Activated CD8-positive, alpha-beta T cell treated with anti-CD3 and anti-CD28 coated beads, Interleukin-2, amount 10 ng/mL, durations not matched to agents 7 days and 5 days (primary cell): ENCODE measurements at regions of chr9 and their contacts with region 1.

Region 1: GRCh38 chr9:114738581-114739316 is 56.8 kb upstream of the TEX48 start:
- DNase-seq: peak; percentile 84
- ATAC-seq: peak; percentile 81
- H3K4me3 Mint-ChIP-seq: no peak overlapping the region
- H3K27ac Mint-ChIP-seq: peak overlapping the region; percentile 86
- H3K4me1 Mint-ChIP-seq: peaks cover 70% of the 10 kb centered on the region
- H3K27me3 Mint-ChIP-seq: no peaks in the 10 kb centered on the region

Region 2: GRCh38 chr9:114691046-114691955 is 47.4 kb before region 1 on chr9:
- CTCF ChIA-PET with region 1: interaction called, 90 read pairs
- POLR2A ChIA-PET with region 1: interaction called, 7 read pairs
- DNase-seq: peak; percentile 91
- ATAC-seq: peak; percentile 93
- H3K4me3 Mint-ChIP-seq: peak overlapping the region; percentile 54
- H3K27ac Mint-ChIP-seq: peak overlapping the region; percentile 93
- H3K4me1 Mint-ChIP-seq: peaks cover 95% of the 10 kb centered on the region
- H3K27me3 Mint-ChIP-seq: no peaks in the 10 kb centered on the region

Region 3: DNA sequence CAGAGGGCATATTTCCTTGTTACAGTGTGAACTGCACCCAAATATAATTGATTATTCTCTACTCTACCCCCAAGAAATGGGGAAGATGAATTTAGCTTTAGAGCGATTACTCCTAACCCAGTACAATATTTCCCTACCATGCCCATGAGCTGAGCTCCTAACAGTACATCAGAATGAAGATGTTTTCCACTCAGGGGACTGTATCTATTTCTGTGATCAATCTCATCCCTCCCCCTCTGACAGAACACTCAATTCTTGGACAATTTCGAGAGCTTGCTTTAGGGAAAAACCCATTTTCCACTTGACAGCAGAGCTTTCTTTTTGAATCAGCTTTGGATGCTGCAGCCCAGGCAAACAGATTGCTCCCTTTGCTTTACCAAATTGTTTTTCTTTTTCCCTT is 32.0 kb before region 1 on chr9:
- CTCF ChIA-PET with region 1: interaction called, 10 read pairs
- POLR2A ChIA-PET with region 1: no interaction called
- DNase-seq: no peak
- ATAC-seq: no peak
- H3K4me3 Mint-ChIP-seq: no peak overlapping the region
- H3K27ac Mint-ChIP-seq: no peak overlapping the region
- H3K4me1 Mint-ChIP-seq: peaks cover 72% of the 10 kb centered on the region
- H3K27me3 Mint-ChIP-seq: no peaks in the 10 kb centered on the region

Region 4: DNA sequence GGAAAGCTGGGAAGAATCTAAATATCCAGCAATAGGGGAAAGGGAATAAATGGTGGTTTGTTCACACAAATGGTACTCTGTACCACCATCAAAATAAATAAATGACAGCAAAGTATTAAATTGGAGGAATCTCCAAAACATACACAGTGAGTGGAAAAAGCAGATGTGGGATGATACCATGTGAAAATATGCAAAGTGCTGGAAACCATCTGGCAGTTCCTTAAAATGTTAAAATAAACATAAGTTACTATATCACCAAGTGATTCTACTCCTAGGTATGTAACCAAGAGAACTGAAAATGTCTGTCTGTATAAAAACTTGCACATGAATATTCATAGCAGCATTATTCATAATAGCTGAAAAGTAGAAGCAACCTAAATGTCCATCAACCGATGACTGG is 14.8 kb before region 1 on chr9:
- CTCF ChIA-PET with region 1: interaction called, 11 read pairs
- POLR2A ChIA-PET with region 1: interaction called, 4 read pairs
- DNase-seq: no peak
- ATAC-seq: no peak
- H3K4me3 Mint-ChIP-seq: no peak overlapping the region
- H3K27ac Mint-ChIP-seq: peak overlapping the region; percentile 5
- H3K4me1 Mint-ChIP-seq: peaks cover 75% of the 10 kb centered on the region
- H3K27me3 Mint-ChIP-seq: no peaks in the 10 kb centered on the region

Region 5: DNA sequence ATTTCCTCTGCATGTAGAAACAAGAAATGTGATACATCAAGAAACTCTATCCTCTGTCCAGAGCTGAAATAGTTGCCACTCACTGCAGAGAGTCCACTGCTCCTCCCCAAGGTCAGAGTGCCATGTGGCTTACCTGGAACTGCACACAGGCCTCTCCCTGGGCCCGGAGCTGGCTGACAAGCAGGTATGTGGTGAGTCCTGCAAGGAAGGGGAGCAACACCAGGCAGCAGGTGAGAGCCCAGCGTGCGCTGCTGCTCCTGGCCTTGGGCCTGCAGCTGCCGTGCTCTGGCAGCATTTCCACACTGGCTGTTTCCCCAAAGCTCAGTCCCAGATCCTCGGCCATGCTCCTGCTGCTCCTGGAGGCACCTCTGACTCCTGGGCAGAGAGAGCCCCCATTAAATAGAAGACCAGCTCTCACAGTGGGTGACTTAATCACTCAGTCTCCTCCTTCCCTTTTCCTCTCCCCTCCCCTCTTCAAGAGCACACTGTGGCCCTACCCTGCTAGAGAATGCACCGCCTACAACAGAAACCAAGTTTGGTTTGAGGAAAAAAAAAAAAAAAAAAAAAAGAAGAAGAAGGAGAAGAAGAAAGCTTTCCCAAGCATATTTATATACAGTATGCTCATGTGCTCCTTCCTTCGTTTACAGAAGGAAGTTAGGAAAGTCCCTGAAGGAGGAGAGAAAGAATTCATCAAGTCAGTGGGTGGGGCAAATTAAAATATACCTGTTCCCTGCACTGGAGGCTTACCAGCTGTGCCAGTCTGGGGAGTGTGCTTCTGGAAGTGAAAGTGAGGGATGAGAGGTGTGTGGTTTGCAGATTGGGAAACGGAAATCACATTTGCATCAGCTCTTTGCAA is 67.1 kb after region 1 on chr9 and contains the start of gene TNFSF15:
- CTCF ChIA-PET with region 1: no interaction called
- POLR2A ChIA-PET with region 1: no interaction called
- DNase-seq: peak; percentile 40
- ATAC-seq: peak; percentile 76
- H3K4me3 Mint-ChIP-seq: peak within 1 kb of the TSS; percentile 66
- H3K27ac Mint-ChIP-seq: peak within 1 kb of the TSS; percentile 78
- H3K4me1 Mint-ChIP-seq: peaks cover 31% of the 10 kb centered on the region
- H3K27me3 Mint-ChIP-seq: no peaks in the 10 kb centered on the region
- total RNA-seq, gene TNFSF15: 1.1 TPM

Region 6: GRCh38 chr9:114906908-114907571 is 168.3 kb after region 1 on chr9:
- CTCF ChIA-PET with region 1: interaction called, 304 read pairs
- POLR2A ChIA-PET with region 1: interaction called, 6 read pairs
- DNase-seq: peak; percentile 57
- ATAC-seq: peak; percentile 11
- H3K4me3 Mint-ChIP-seq: peak overlapping the region; percentile 62
- H3K27ac Mint-ChIP-seq: peak overlapping the region; percentile 90
- H3K4me1 Mint-ChIP-seq: peaks cover 56% of the 10 kb centered on the region
- H3K27me3 Mint-ChIP-seq: no peaks in the 10 kb centered on the region

Region 7: DNA sequence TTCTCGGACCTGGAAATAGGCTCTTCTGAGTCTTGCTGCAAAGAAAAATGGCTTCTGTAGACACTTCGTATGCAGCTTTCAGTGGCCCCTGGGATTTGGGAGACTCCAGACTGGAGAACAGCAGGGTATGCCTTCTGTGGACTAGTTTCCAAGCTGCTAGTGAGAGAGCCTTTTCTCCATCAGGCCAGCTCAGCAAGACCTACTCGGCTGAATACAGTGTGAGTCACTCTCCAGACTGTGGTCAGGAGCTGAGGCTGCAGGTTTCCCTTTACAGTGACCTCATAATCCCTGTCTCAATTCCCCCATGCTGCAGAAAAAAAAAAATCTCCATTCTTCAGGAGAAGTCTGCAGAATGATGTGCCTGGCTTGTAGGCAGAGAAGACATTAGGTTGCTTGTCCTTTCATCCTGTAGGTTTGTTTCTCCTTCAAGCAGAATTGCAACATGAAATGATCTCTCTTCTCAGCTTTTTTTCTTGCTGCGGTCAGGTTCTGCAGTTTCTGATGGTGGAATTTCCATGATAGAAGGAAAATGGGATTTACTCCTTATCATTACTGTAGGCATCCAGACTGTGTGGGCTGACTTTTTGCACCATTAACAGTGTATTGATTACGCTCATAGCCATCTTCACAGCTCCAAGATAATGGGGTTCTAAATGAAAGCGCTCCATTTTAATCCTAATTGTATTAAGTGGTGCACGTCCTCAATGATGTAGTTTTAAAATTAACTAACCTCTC is 270.0 kb after region 1 on chr9:
- CTCF ChIA-PET with region 1: interaction called, 14 read pairs
- POLR2A ChIA-PET with region 1: no interaction called
- DNase-seq: peak; percentile 34
- ATAC-seq: peak; percentile 49
- H3K4me3 Mint-ChIP-seq: no peak overlapping the region
- H3K27ac Mint-ChIP-seq: no peak overlapping the region
- H3K4me1 Mint-ChIP-seq: peaks cover 61% of the 10 kb centered on the region
- H3K27me3 Mint-ChIP-seq: no peaks in the 10 kb centered on the region

Region 8: GRCh38 chr9:115013998-115014397 is 275.2 kb after region 1 on chr9:
- CTCF ChIA-PET with region 1: interaction called, 70 read pairs
- POLR2A ChIA-PET with region 1: no interaction called
- DNase-seq: peak; percentile 89
- ATAC-seq: peak; percentile 93
- H3K4me3 Mint-ChIP-seq: no peak overlapping the region
- H3K27ac Mint-ChIP-seq: peak overlapping the region; percentile 70
- H3K4me1 Mint-ChIP-seq: peaks cover 48% of the 10 kb centered on the region
- H3K27me3 Mint-ChIP-seq: no peaks in the 10 kb centered on the region